Heart right ventricle (tissue), 16 donors: ENCODE measurements at regions of chr6 and their contacts with region 1.

Region 1: GRCh38 chr6:163347021-163347446 is 67.5 kb upstream of the QKI start:
- DNase-seq: no peak
- ATAC-seq: peak in 7 of 8 donors; percentile 21 to 43 (median 31)
- H3K4me3 ChIP-seq: no peak overlapping the region
- H3K27ac ChIP-seq: peak overlapping the region in 9 of 10 donors; percentile 22 to 61 (median 54)
- H3K4me1 ChIP-seq: peaks cover 6 to 38% (median 23%) of the 10 kb centered on the region in 9 donors
- H3K27me3 ChIP-seq: no peaks in the 10 kb centered on the region
- CTCF ChIP-seq: no peak

Region 2: GRCh38 chr6:163392533-163392932 is 45.5 kb after region 1 on chr6:
- intact Hi-C with region 1: loop called in 3 of 10 experiments (anchors 5 to 10 kb)
- DNase-seq: peak in 1 of 2 donors; percentile 57
- ATAC-seq: peak; percentile 50 to 86 (median 74)
- H3K4me3 ChIP-seq: no peak overlapping the region
- H3K27ac ChIP-seq: peak overlapping the region in 1 of 10 donors; percentile 29
- H3K4me1 ChIP-seq: peaks cover 0 to 57% (median 35%) of the 10 kb centered on the region in 9 donors
- H3K27me3 ChIP-seq: no peaks in the 10 kb centered on the region
- CTCF ChIP-seq: no peak

Region 3: GRCh38 chr6:163490826-163491577 is 144.0 kb after region 1 on chr6:
- intact Hi-C with region 1: no loop called
- DNase-seq: peak; percentile 40 to 86
- ATAC-seq: peak; percentile 69 to 86 (median 80)
- H3K4me3 ChIP-seq: no peak overlapping the region
- H3K27ac ChIP-seq: peak overlapping the region in 8 of 10 donors; percentile 2 to 75 (median 60)
- H3K4me1 ChIP-seq: peaks cover 0 to 100% (median 92%) of the 10 kb centered on the region in 9 donors
- H3K27me3 ChIP-seq: no peaks in the 10 kb centered on the region
- CTCF ChIP-seq: no peak